Heart right ventricle (tissue), 16 donors: ENCODE measurements at regions of chr10 and their contacts with region 1.

Region 1: GRCh38 chr10:71234970-71235685 is 22.8 kb downstream of the UNC5B start:
- DNase-seq: peak; percentile 70 to 74
- ATAC-seq: peak; percentile 53 to 84 (median 74)
- H3K4me3 ChIP-seq: peak overlapping the region in 4 of 10 donors; percentile 12 to 30 (median 20)
- H3K27ac ChIP-seq: peak overlapping the region; percentile 13 to 85 (median 64)
- H3K4me1 ChIP-seq: peaks cover 59 to 100% (median 87%) of the 10 kb centered on the region in 9 donors
- H3K27me3 ChIP-seq: no peaks in the 10 kb centered on the region
- CTCF ChIP-seq: no peak

Region 2: GRCh38 chr10:71092812-71093401 is 142.2 kb before region 1 on chr10:
- intact Hi-C with region 1: no loop called
- DNase-seq: no peak
- ATAC-seq: peak in 4 of 8 donors; percentile 44 to 65 (median 56)
- H3K4me3 ChIP-seq: no peak overlapping the region
- H3K27ac ChIP-seq: peak overlapping the region in 1 of 10 donors; percentile 44
- H3K4me1 ChIP-seq: peaks cover 0 to 10% (median 0%) of the 10 kb centered on the region in 9 donors
- H3K27me3 ChIP-seq: peaks cover 0 to 9% (median 0%) of the 10 kb centered on the region in 7 donors
- CTCF ChIP-seq: no peak

Region 3: GRCh38 chr10:71250405-71250804 is 15.3 kb after region 1 on chr10:
- intact Hi-C with region 1: loop called in 1 of 10 experiments (anchors 2 kb)
- DNase-seq: no peak
- ATAC-seq: no peak
- H3K4me3 ChIP-seq: no peak overlapping the region
- H3K27ac ChIP-seq: peak overlapping the region in 1 of 10 donors; percentile 60
- H3K4me1 ChIP-seq: peaks cover 40 to 100% (median 82%) of the 10 kb centered on the region in 9 donors
- H3K27me3 ChIP-seq: no peaks in the 10 kb centered on the region
- CTCF ChIP-seq: no peak